ENCODE measurements at regions of chr7 and their contacts with region 1.

Region 1: DNA sequence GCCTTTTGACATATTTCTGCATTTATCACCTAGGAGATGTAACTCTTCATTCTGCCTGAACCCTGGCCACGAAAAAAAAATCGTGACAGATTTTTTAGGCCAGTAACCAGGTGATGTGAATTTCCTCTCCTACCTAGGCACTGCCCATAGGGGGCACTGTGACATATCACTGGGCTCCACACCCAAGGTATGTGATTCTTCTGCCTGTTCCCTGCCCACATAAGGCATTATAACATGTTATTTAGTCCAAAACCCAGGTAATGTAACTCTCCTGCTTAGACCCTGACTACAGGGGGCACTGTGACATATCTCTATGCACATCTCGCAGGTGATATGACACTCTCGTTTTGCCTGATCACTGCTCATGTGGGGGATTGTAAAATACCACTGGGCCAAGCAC is 29.5 kb upstream of the ZNF107 start:
- DNase-seq: peak; percentile 69
- H3K4me3 ChIP-seq: no peak overlapping the region
- H3K27ac ChIP-seq: no peak overlapping the region
- H3K4me1 ChIP-seq: no peaks in the 10 kb centered on the region
- CTCF ChIP-seq: peak; percentile 86

Region 2: GRCh38 chr7:64533756-64534155 is 102.6 kb before region 1 on chr7:
- CTCF ChIA-PET with region 1: no interaction called
- POLR2A ChIA-PET with region 1: no interaction called
- intact Hi-C with region 1: no loop called
- DNase-seq: no peak
- H3K4me3 ChIP-seq: no peak overlapping the region
- H3K27ac ChIP-seq: no peak overlapping the region
- H3K4me1 ChIP-seq: no peaks in the 10 kb centered on the region
- CTCF ChIP-seq: no peak

Region 3: DNA sequence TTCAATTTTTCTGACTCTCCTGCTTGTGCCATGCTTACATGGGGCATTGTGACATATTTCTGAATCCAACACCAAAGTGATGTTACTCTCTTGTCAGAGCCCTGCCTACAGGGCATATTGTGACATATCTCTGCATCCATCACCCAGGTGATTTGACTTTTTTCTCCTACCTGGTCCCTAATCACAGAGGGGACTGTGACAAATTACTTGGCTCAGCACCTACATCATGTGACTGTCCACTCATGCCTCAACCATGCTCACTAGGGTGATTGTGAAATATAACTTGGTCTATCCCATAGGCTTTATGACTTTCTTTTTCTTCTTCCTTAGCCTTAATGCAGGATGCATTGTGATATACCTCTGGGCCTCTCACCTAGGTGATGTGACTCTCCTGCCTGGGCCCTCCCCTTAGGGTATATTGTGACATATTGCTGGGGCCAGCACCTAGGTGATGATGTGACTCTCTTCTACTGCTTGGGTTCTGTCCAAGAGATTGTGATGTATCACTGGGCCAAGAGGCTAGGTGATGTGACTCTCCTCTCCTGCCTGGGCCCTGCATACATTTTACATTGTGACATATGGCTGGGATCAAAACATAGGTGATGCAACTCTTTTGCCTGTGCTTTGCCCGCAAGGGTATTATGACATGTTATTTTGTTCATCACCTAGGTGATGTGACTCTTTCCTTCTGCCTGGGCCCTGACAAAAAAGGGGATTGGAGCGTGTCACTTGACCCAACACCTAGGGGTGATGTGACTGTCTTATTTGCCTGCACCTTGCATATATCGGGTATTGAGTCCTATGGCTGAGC is 14.8 kb after region 1 on chr7:
- CTCF ChIA-PET with region 1: no interaction called
- POLR2A ChIA-PET with region 1: no interaction called
- intact Hi-C with region 1: no loop called
- DNase-seq: no peak
- H3K4me3 ChIP-seq: no peak overlapping the region
- H3K27ac ChIP-seq: no peak overlapping the region
- H3K4me1 ChIP-seq: no peaks in the 10 kb centered on the region
- CTCF ChIP-seq: no peak

Region 4: DNA sequence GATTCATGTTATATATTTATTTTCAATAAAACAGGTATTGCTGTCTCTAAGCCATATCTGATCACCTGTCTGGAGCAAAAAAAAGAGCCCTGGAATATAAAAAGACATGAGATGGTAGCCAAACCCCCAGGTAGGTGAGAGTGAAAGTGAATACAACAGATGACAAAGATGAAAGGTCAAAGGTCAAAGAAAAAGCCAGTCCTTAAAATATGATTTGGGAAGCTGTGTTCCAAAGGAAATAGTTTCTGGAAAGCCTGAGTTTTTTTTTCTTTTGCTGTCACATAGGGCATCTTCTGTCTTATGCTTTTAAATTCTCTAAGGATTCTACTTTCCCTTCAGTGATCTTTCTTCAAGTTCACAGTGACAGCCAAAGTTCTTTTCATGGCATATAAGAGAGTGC is 55.4 kb after region 1 on chr7:
- CTCF ChIA-PET with region 1: no interaction called
- POLR2A ChIA-PET with region 1: no interaction called
- intact Hi-C with region 1: loop called (anchors 5 kb)
- DNase-seq: no peak
- H3K4me3 ChIP-seq: no peak overlapping the region
- H3K27ac ChIP-seq: peak overlapping the region; percentile 99
- H3K4me1 ChIP-seq: peaks cover 53% of the 10 kb centered on the region
- CTCF ChIP-seq: no peak

Region 5: DNA sequence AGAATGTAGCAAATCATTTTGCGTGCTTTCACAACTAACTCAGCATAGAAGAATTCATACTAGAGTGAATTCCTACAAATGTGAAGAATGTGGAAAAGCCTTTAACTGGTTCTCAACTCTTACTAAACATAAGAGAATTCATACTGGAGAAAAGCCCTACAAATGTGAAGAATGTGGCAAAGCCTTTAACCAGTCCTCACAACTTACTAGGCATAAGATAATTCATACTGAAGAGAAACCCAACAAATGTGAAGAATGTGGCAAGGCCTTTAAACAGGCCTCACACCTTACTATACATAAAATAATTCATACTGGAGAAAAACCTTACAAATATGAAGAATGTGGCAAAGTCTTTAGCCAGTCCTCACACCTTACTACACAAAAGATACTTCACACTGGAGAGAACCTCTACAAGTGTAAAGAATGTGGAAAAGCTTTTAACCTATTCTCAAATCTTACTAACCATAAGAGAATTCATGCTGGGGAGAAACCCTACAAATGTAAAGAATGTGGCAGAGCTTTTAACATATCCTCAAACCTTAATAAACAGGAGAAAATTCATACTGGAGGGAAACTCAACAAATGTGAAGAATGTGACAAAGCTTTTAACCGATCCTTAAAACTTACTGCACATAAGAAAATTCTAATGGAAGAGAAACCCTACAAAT is 70.4 kb after region 1 on chr7:
- CTCF ChIA-PET with region 1: no interaction called
- POLR2A ChIA-PET with region 1: no interaction called
- intact Hi-C with region 1: loop called (anchors 5 kb)
- DNase-seq: no peak
- H3K4me3 ChIP-seq: no peak overlapping the region
- H3K27ac ChIP-seq: no peak overlapping the region
- H3K4me1 ChIP-seq: no peaks in the 10 kb centered on the region
- CTCF ChIP-seq: no peak

Region 6: DNA sequence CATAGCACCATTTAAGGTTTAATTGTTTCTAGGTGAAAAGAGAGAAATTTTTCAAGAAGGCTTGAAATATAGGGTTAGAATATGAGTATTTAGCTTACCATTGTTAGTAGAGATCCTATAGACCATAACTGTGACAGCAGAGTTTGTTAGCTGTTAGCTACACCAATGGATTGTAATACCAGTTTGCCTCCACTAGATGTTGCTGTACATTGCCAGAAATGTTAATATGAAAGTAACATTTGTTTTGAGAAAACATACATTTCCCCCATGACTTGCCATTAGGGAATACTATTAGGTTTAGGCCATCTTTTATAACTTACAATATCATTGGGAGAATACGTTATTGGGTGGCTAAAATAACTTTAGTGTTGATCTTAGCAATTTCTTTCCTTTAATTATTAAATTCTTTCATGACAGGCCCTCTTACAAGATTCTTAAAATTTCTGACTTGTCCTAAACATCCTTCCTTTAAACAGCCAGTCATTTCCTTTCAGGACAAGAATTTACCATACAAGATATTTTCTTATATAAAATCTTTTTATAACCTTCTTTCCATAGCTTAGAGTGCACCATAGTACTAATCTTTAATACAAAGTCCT is 315.0 kb after region 1 on chr7:
- CTCF ChIA-PET with region 1: no interaction called
- POLR2A ChIA-PET with region 1: no interaction called
- intact Hi-C with region 1: loop called (anchors 5 kb)
- DNase-seq: peak; percentile 72
- H3K4me3 ChIP-seq: no peak overlapping the region
- H3K27ac ChIP-seq: no peak overlapping the region
- H3K4me1 ChIP-seq: no peaks in the 10 kb centered on the region
- CTCF ChIP-seq: peak; percentile 92